Left cardiac atrium (tissue), 4 donors: ENCODE measurements at regions of chr12 and their contacts with region 1.

Region 1: DNA sequence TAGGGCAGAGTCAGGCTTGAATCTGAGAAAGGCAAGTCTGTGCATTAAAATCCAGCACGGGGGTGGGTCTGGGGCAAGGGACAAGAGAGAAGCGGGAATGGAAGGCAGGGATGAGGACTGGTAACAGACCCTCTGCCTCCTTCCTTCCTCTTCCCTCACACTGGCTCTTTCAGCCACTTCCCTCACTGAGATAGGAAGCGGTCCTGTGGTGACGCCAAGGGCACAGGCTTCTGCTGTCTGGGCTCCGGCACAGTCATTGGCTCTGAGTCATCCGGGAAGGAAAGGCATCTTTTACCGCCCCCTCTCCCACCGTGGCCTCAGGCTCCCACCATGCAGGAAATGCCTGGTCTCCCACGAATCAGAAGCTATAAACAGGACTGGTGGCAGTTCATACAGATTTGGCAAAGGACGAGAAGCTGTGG is 70.2 kb downstream of the ETV6 start:
- DNase-seq: peak; percentile 74
- ATAC-seq: peak; percentile 80 to 90

Region 2: GRCh38 chr12:11431486-11431885 is 288.2 kb before region 1 on chr12:
- intact Hi-C with region 1: no loop called
- DNase-seq: no peak
- ATAC-seq: no peak

Region 3: DNA sequence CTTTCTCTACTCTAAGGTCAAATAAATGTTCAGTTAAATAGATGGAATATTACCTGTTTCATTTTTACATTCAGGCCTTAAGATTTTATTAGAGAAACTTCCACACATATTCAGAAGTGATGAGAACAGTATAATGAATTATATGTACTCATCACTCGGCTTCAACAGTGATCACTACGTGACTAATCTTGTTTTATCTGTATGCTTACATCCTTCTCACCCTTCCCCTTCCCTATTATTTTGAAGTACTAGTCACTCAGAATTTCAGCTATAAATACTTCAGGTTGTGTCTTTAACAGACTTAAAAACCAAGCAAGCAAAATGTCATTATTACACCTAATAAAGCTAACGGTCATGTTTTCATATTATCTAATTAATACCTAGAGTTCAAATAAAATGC is 35.3 kb before region 1 on chr12:
- intact Hi-C with region 1: no loop called
- DNase-seq: no peak
- ATAC-seq: no peak

Region 4: DNA sequence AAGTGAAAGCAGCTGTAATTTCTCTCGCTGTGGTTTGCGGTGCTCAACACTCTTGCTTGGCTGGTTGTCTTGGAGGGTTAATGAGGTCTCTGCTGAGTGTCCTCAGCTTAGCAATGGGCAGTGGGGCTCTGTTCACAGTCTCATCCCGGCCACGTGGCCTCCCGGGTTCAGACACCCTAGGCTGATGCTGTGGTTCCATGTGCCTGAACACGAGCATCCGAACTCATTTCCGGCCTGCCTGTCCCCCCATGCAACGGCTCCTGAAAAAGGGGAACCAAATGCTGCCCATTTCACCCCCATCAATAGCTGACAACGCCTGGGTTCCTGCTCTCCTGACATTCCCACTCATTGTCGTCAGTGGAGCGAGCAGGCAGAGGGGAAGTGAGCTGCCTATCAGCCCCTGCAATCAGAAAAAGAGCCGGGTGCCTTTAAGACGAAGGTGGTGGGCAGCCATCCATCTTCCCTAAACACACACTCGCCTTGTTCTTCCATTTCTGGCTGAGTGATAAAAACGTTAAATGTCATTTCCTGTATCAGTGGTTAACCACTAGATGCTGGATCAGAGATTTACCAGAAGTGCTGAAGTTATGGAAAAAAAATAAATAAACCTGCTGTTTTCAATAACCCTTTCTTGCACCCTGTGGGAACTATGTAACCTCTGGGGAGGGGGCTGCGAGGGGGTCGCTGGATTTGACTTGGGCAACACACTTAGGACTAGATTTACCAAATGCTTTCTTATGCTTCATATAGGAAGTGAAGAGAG is 290.8 kb after region 1 on chr12:
- intact Hi-C with region 1: loop called in 1 of 2 experiments (anchors 10 kb)
- DNase-seq: peak; percentile 68
- ATAC-seq: peak; percentile 74 to 80